Heart left ventricle (tissue), 16 donors: ENCODE measurements at regions of chr3 and their contacts with region 1.

Region 1: GRCh38 chr3:171206283-171206682 is 179.8 kb upstream of the SLC2A2 start:
- DNase-seq: no peak
- ATAC-seq: no peak
- H3K4me3 ChIP-seq: no peak overlapping the region
- H3K27ac ChIP-seq: no peak overlapping the region
- H3K4me1 ChIP-seq: peaks cover 0 to 12% (median under 1%) of the 10 kb centered on the region in 12 donors
- H3K27me3 ChIP-seq: no peaks in the 10 kb centered on the region
- CTCF ChIP-seq: no peak
- POLR2A ChIP-seq: no peak

Region 2: DNA sequence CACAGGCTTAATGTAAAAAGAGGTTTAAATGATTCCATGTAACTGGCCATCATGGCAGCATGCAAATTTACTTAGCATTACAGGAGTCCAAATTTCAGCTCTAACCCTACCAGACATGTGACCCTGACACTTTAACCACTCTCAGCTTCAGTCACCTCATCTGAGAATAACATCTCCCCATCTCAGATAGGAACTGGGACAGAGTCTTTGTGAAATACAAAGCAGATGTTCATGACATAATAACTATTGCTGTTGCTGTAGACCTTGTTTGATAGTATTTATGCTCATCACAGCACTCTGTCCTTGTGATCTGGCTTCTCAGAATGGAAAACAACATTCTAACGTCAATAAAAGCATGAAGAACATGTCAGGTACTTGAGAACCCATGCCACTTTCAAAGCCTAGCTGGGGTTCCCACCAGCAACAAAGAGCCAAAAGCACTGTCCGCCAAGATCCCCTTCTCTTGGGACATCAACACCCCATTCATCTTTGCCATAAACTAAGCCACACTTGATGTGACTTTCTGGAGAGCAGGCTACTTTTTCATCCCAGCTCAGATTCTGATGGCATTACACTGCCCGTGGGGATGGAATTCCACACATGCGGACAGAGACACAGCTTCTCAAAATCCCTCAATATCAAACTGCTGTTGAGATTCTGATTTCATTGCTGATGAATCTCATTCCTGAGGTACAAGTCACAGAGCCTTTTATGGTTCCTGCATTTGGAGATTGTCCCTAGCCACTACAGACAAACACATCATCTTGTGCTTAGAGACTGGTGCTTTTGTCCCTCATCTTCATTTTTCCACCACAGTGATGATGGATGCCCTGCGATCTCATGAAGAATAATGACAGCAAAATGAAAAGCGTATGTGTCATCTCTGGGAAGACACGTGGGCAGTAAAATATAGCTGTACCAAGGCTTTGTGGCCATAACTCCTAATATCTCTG is 51.2 kb after region 1 on chr3:
- intact Hi-C with region 1: loop called in 1 of 10 experiments (anchors 10 kb)
- DNase-seq: no peak
- ATAC-seq: peak; percentile 25 to 46 (median 29)
- H3K4me3 ChIP-seq: no peak overlapping the region
- H3K27ac ChIP-seq: peak overlapping the region in 11 of 12 donors; percentile 22 to 83 (median 49)
- H3K4me1 ChIP-seq: peaks cover 0 to 53% (median 17%) of the 10 kb centered on the region in 12 donors
- H3K27me3 ChIP-seq: no peaks in the 10 kb centered on the region
- CTCF ChIP-seq: no peak
- POLR2A ChIP-seq: no peak